ENCODE measurements at regions of chr7 and their contacts with region 1.

Region 1: DNA sequence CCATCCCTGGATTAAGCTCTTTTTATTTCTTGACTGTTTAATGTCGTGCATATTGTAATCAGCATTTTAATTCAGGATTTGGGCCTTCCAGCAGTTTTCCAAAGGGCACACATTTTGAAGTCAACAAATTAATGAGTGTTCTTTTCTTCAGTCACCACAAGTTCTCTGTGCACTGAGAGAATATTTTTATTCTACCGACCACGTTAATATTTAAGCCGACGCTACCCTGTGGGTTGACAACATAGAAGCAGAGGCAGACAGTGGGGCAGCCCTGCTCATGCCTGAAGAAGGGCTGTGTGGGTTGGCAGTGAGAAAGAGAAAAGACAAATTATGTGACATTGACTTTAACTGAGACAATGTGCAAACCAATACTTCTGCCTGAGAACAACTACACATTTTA is 125.6 kb downstream of the ICA1 start:
- DNase-seq: no peak
- H3K4me3 ChIP-seq: no peak overlapping the region
- H3K27ac ChIP-seq: no peak overlapping the region
- H3K4me1 ChIP-seq: no peaks in the 10 kb centered on the region
- H3K27me3 ChIP-seq: no peaks in the 10 kb centered on the region
- CTCF ChIP-seq: no peak
- EP300 ChIP-seq: no peak
- POLR2A ChIP-seq: no peak

Region 2: GRCh38 chr7:8092140-8092539 is 44.2 kb before region 1 on chr7:
- intact Hi-C with region 1: no loop called
- DNase-seq: no peak
- H3K4me3 ChIP-seq: no peak overlapping the region
- H3K27ac ChIP-seq: no peak overlapping the region
- H3K4me1 ChIP-seq: no peaks in the 10 kb centered on the region
- H3K27me3 ChIP-seq: no peaks in the 10 kb centered on the region
- CTCF ChIP-seq: no peak
- EP300 ChIP-seq: no peak
- POLR2A ChIP-seq: no peak

Region 3: DNA sequence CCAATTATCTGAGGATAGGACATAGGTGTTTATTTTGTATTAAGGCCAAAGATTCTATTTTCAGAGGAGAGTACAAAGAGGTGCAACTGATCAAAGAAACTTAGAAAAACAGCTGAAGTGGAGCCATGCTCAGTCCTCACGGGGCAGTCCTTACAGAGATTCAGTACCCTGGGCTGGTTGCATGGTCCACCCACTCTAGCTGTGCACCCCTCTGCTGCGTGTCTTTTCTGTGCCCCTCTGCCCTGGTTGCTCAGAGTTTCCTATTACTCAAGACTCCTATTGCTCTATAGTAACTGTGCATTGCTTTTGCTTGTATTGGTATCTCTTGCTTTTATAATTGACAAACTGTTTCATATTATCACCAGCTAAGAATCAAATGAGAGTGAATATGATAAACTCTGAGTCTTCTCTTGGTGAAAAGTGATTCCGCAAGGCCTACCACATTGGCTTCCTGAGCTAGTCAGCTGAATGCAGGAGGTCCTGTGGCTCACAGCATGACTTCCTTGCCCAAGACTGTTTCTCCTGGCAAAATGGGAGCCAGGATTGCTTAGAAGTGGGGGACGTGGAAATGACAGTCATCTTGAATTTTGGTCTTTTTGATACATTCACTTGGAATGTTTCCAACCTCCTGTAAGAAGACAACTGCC is 30.8 kb before region 1 on chr7:
- intact Hi-C with region 1: loop called (anchors 2 kb)
- DNase-seq: no peak
- H3K4me3 ChIP-seq: no peak overlapping the region
- H3K27ac ChIP-seq: no peak overlapping the region
- H3K4me1 ChIP-seq: no peaks in the 10 kb centered on the region
- H3K27me3 ChIP-seq: no peaks in the 10 kb centered on the region
- CTCF ChIP-seq: no peak
- EP300 ChIP-seq: no peak
- POLR2A ChIP-seq: no peak

Measured in esophagus muscularis mucosa (tissue), 4 donors.